ENCODE measurements at regions of chr17 and their contacts with region 1.

Region 1: GRCh38 chr17:1331708-1332107 is 52.2 kb downstream of the TRARG1 start:
- DNase-seq: no peak
- H3K27ac ChIP-seq: no peak overlapping the region
- CTCF ChIP-seq: no peak

Region 2: DNA sequence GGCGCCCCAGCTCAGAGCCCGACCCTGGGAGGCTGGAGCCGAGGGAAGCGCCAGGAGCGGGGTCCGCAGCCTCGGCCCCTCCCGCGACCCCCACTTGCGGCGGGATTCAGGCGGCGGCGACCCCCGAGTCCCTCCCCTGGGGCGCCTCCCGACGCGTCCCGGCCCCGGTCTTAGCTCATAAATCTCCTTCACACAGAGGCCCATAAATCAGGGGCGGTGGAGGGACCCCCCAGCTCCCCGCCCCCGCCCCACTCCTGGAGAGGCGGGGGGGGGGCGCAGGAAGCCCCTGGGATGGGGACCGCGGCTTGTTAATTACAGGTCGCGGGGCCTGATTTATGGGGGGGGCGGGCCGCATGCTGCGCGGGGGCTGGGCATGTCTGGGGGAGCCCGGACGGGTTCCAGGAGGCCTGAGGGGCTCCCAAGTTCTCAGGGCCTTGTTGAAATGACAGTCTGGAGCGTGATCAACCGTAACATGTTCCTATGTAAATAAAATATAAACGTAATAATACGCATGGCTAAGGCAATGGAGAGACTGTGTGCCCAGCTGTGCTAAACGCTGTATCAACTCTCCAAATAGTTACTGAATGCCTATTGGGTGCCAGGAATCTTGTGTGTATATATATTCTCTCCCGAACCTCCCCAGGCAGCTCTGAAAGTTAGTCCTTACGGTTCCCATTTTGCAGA is 71.5 kb before region 1 on chr17:
- CTCF ChIA-PET with region 1: interaction called, 17 read pairs
- POLR2A ChIA-PET with region 1: no interaction called
- DNase-seq: no peak
- H3K27ac ChIP-seq: no peak overlapping the region
- CTCF ChIP-seq: no peak

Region 3: GRCh38 chr17:1275205-1275961 is 56.3 kb before region 1 on chr17:
- CTCF ChIA-PET with region 1: interaction called, 10 read pairs
- POLR2A ChIA-PET with region 1: no interaction called
- DNase-seq: no peak
- H3K27ac ChIP-seq: no peak overlapping the region
- CTCF ChIP-seq: no peak

Region 4: GRCh38 chr17:1280652-1281051 is 51.1 kb before region 1 on chr17:
- CTCF ChIA-PET with region 1: interaction called, 10 read pairs
- POLR2A ChIA-PET with region 1: no interaction called
- DNase-seq: no peak
- H3K27ac ChIP-seq: no peak overlapping the region
- CTCF ChIP-seq: no peak

Region 5: DNA sequence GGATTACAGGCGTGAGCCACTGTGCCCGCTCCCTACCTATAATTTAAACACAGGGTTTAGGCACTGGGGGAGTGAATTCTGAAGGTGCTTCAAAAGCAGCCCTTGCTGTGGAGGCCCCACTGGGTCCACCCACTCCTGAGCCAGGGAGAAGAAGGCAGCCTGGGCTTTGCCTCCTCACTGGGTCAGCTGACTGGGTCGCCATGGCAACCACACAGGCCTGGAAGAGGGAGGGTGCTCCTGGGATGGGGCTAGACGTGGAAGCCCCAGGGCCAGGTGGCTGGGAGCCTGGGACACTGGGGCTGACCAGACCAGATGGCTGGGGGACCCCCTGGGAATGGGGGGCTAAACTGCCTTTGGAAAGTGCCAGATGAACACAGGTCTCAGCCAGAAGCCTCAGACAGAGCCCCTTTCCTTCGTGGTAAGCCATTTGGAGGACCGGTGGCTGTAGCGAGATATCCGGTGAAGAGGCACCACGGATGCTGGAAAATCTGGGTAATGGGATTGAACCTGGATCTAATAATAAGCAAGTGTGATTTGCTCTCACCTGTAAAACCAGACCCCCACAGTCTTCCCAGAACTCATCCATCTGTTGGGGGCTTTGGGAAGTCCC is 19.3 kb before region 1 on chr17:
- CTCF ChIA-PET with region 1: no interaction called
- POLR2A ChIA-PET with region 1: no interaction called
- DNase-seq: no peak
- H3K27ac ChIP-seq: no peak overlapping the region
- CTCF ChIP-seq: no peak

Measured in RWPE1 (cell line).